A549 (cell line): ENCODE measurements at regions of chr10 and their contacts with region 1.

Region 1: DNA sequence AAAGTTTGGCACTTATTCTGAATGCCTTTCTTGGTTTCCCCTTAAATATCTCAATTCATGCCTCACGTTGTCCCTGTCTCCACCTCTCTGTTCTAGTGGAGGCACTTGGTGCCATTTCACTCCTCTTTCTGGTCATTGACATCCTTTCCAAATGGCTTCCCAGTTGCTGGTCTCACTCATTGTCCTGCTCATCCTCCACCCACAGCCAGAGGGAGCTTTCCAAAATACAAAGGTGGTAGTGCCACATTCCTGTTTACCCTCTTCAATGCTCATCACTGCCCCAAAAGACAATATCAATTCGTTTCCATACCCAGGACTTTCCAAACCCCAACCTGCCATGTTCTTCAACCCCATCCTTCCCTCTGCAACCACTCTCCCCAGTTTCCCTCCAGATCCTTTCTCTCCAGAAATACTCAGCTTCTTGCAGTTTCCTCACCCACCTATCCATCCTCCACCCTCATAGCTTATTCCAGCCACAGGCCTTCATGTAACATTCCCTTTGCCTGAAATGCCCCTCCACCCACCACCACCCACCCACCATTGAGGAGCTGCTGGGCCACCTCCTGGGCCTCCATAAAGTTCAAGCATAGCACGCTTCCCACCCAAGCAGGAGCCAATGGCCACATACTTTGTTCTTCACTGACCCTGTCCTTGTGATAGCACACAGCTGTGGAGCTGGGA is 63.1 kb upstream of the ADRB1 start:
- DNase-seq: peak in 1 of 2 experiments; percentile 21
- ATAC-seq: peak; percentile 52 to 73; a peak in 3 of 6 replicates
- H3K4me3 ChIP-seq: no peak overlapping the region
- H3K27ac ChIP-seq: no peak overlapping the region
- H3K4me1 ChIP-seq: no peaks in the 10 kb centered on the region
- CTCF ChIP-seq: peak; percentile 30; the same call in 2 of the 3 replicates
- EP300 ChIP-seq: no peak
- POLR2A ChIP-seq: no peak
- RAD21 ChIP-seq: peak in 1 of 2 experiments; percentile 31; a peak in 2 of 5 replicates

Region 2: DNA sequence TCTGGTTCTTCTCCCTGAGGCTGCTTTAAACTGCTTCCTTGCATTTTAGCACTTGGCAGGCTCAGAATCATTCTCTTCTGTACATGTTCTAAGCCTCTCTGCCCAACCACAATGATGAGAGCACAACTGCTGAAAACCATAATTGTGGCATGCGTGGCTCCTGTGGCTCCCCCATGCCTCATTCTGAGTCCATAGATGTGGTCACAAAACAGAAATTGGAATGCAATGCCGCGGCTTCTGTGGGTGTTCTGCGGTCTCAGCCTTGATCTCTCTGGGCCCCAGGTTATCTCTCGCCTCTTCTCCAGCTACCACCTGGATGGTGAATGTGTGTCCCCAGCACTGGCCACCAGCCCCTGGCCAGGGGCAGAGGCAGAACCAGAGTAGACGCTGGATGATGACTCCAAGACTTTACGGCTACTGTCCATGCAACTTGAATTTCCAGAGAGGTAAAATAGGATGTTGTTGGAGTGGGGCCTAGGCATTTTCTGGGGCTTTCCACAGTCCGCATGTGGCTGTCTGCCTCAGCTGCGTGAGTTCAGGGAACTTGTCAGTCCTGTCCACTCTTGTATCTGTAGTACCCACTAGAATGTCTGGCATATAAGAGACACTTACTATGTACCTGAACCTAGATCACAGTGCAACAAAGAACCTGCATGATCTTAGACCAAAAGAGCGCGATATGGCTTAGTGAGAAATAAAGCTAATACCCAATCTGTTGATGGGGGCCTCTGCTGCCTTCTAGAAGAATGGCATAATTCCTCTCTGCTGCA is 10.7 kb after region 1 on chr10:
- CTCF ChIA-PET with region 1: interaction called, 11 read pairs
- POLR2A ChIA-PET with region 1: no interaction called
- DNase-seq: no peak
- ATAC-seq: no peak
- H3K4me3 ChIP-seq: no peak overlapping the region
- H3K27ac ChIP-seq: no peak overlapping the region
- H3K4me1 ChIP-seq: no peaks in the 10 kb centered on the region
- CTCF ChIP-seq: no peak
- EP300 ChIP-seq: no peak
- POLR2A ChIP-seq: no peak
- RAD21 ChIP-seq: no peak